Dendritic cell treated with granulocyte-macrophage colony-stimulating factor and Interleukin-4, amounts not matched to agents 40 ng/mL and 50 ng/mL, for 4 days (primary cell): ENCODE measurements at regions of chr1 and their contacts with region 1.

Region 1: GRCh38 chr1:205121660-205122488 is at the start of gene RBBP5:
- H3K4me3 Mint-ChIP-seq: peak within 1 kb of the TSS; percentile 99
- H3K27ac Mint-ChIP-seq: peak within 1 kb of the TSS; percentile 92
- H3K4me1 Mint-ChIP-seq: peaks cover 37% of the 10 kb centered on the region
- H3K27me3 Mint-ChIP-seq: no peaks in the 10 kb centered on the region

Region 2: GRCh38 chr1:205141236-205142101 is 19.6 kb after region 1 on chr1:
- intact Hi-C with region 1: loop called (anchors 1 kb)
- H3K4me3 Mint-ChIP-seq: no peak overlapping the region
- H3K27ac Mint-ChIP-seq: no peak overlapping the region
- H3K4me1 Mint-ChIP-seq: peaks cover 33% of the 10 kb centered on the region
- H3K27me3 Mint-ChIP-seq: no peaks in the 10 kb centered on the region

Region 3: GRCh38 chr1:205211169-205211838 is 89.4 kb after region 1 on chr1 and contains the start of gene DSTYK:
- intact Hi-C with region 1: loop called (anchors 2 kb)
- H3K4me3 Mint-ChIP-seq: peak within 1 kb of the TSS; percentile 91
- H3K27ac Mint-ChIP-seq: peak within 1 kb of the TSS; percentile 96
- H3K4me1 Mint-ChIP-seq: peaks cover 51% of the 10 kb centered on the region
- H3K27me3 Mint-ChIP-seq: no peaks in the 10 kb centered on the region